Panc1 (cell line): ENCODE measurements at regions of chr16 and their contacts with region 1.

Region 1: GRCh38 chr16:71499775-71500364 is 10.7 kb upstream of the ZNF19 start:
- DNase-seq: peak; percentile 56
- ATAC-seq: peak; percentile 80
- H3K4me3 ChIP-seq: no peak overlapping the region
- H3K27ac ChIP-seq: no peak overlapping the region
- H3K4me1 ChIP-seq: no peaks in the 10 kb centered on the region
- H3K27me3 ChIP-seq: no peaks in the 10 kb centered on the region
- CTCF ChIP-seq: peak; percentile 73

Region 2: GRCh38 chr16:71412270-71413160 is 87.4 kb before region 1 on chr16:
- CTCF ChIA-PET with region 1: interaction called, 8 read pairs
- POLR2A ChIA-PET with region 1: no interaction called
- in situ Hi-C with region 1: no loop called
- intact Hi-C with region 1: loop called (anchors 2 kb)
- DNase-seq: peak; percentile 50
- ATAC-seq: peak; percentile 92
- H3K4me3 ChIP-seq: peak overlapping the region in 1 of 2 experiments; percentile 20; a peak in 1 of 4 replicates
- H3K27ac ChIP-seq: no peak overlapping the region
- H3K4me1 ChIP-seq: no peaks in the 10 kb centered on the region; the same call in 1 of the 2 replicates
- H3K27me3 ChIP-seq: no peaks in the 10 kb centered on the region; the same call in 1 of the 2 replicates
- CTCF ChIP-seq: peak; percentile 85